B cell (primary cell): ENCODE measurements at regions of chr22 and their contacts with region 1.

Region 1: DNA sequence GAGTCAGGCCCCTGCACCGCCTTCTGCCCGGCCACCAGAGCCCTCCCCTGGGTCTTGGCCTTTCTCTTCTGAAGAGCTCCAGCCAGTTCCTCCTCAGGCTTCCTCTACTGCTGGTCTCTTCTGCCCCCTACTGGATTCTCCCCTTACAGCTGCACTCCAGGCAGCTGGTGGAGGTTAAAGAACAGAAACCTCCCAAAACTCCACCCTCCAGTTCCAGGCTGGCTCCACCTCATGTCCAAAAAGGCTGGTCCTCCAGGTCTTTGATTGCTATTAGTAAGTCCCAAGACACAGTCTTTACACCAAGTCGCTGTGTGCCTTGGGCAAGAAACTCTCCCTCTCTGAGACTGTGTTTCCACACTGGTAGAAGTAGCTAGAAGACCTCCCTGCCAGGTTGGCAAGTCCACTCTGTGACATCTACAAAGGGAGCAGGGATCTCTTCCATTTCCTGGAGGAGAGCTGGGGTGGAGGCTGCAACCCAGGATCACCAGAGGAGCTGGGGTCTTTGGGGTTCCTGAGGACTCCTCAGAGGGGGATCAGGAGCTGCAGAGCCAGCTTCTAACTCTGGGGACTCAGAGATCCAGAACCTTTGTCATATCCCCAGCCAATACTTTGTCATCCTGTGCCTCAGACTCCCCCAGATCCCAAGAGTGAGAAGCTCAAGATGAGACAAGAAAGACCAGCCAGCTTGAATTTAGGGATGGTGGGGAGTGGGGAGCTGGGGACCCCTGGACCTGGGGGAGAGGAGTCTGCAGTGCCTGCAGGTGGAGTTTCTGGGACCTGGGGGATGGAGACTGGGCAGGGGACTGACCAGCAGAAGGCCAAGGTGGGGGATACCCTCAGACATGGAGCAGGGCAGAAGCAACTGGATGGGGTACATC is 3.4 kb upstream of the IGLL5 start:
- DNase-seq: peak; percentile 86
- ATAC-seq: peak; percentile 59
- H3K4me3 ChIP-seq: peak overlapping the region in 2 of 5 experiments; percentile 11 to 44
- H3K4me3 Mint-ChIP-seq: peak overlapping the region; percentile 74
- H3K27ac ChIP-seq: peak overlapping the region; percentile 38 to 56
- H3K27ac Mint-ChIP-seq: peak overlapping the region; percentile 81
- H3K4me1 ChIP-seq: peaks cover 83 to 95% of the 10 kb centered on the region in 2 donors
- H3K4me1 Mint-ChIP-seq: peaks cover 94% of the 10 kb centered on the region
- H3K27me3 ChIP-seq: peaks cover 0 to 10% (median 3%) of the 10 kb centered on the region in 4 experiments
- H3K27me3 Mint-ChIP-seq: peaks cover 10% of the 10 kb centered on the region
- CTCF ChIP-seq: peak; percentile 77

Region 2: GRCh38 chr22:22666307-22667091 is 217.8 kb before region 1 on chr22:
- CTCF ChIA-PET with region 1: interaction called, 19 read pairs
- POLR2A ChIA-PET with region 1: no interaction called
- intact Hi-C with region 1: no loop called
- DNase-seq: peak; percentile 63
- ATAC-seq: peak; percentile 78
- H3K4me3 ChIP-seq: no peak overlapping the region
- H3K4me3 Mint-ChIP-seq: no peak overlapping the region
- H3K27ac ChIP-seq: no peak overlapping the region
- H3K27ac Mint-ChIP-seq: peak overlapping the region; percentile 6
- H3K4me1 ChIP-seq: peaks cover 6 to 18% of the 10 kb centered on the region in 2 donors
- H3K4me1 Mint-ChIP-seq: peaks cover 17% of the 10 kb centered on the region
- H3K27me3 ChIP-seq: peaks cover 0 to 2% (median 0%) of the 10 kb centered on the region in 4 experiments
- H3K27me3 Mint-ChIP-seq: peaks cover 3% of the 10 kb centered on the region
- CTCF ChIP-seq: peak; percentile 71

Region 3: DNA sequence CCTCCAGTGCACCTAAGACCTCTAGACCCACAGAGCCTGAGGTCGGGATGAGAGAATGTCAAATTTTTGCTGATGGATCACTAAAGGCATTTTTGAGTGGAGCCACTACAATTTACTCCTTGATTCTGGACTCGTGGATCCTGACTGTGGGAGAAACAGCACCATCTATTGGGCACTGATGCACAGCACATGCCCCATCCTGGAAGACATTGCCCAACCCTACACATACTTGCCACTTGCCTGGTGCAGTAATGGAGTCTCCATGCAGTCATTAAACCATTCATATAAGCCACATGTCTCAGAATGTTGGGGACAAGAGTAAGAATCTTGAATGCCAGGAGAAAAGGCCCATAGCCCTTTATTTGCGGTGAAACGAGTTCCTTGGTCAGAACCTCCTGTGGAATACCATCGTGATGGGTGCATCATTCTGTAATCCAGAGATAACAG is 135.9 kb before region 1 on chr22:
- CTCF ChIA-PET with region 1: interaction called, 55 read pairs
- POLR2A ChIA-PET with region 1: no interaction called
- intact Hi-C with region 1: loop called (anchors 1 kb)
- DNase-seq: peak; percentile 67
- ATAC-seq: peak; percentile 26
- H3K4me3 ChIP-seq: no peak overlapping the region
- H3K4me3 Mint-ChIP-seq: peak overlapping the region; percentile 26
- H3K27ac ChIP-seq: no peak overlapping the region
- H3K27ac Mint-ChIP-seq: peak overlapping the region; percentile 13
- H3K4me1 ChIP-seq: peaks cover 40 to 47% of the 10 kb centered on the region in 2 donors
- H3K4me1 Mint-ChIP-seq: peaks cover 51% of the 10 kb centered on the region
- H3K27me3 ChIP-seq: no peaks in the 10 kb centered on the region
- H3K27me3 Mint-ChIP-seq: no peaks in the 10 kb centered on the region
- CTCF ChIP-seq: no peak

Region 4: GRCh38 chr22:22810018-22810427 is 74.2 kb before region 1 on chr22:
- CTCF ChIA-PET with region 1: interaction called, 125 read pairs
- POLR2A ChIA-PET with region 1: interaction called, 5 read pairs
- intact Hi-C with region 1: loop called (anchors 1 kb)
- DNase-seq: peak; percentile 84
- ATAC-seq: peak; percentile 76
- H3K4me3 ChIP-seq: peak overlapping the region in 1 of 5 experiments; percentile 1
- H3K4me3 Mint-ChIP-seq: no peak overlapping the region
- H3K27ac ChIP-seq: no peak overlapping the region
- H3K27ac Mint-ChIP-seq: no peak overlapping the region
- H3K4me1 ChIP-seq: peaks cover 9 to 26% of the 10 kb centered on the region in 2 donors
- H3K4me1 Mint-ChIP-seq: peaks cover 24% of the 10 kb centered on the region
- H3K27me3 ChIP-seq: peaks cover 0 to 9% (median 0%) of the 10 kb centered on the region in 4 experiments
- H3K27me3 Mint-ChIP-seq: peaks cover 12% of the 10 kb centered on the region
- CTCF ChIP-seq: peak; percentile 91

Region 5: GRCh38 chr22:22865311-22866072 is 18.8 kb before region 1 on chr22:
- CTCF ChIA-PET with region 1: interaction called, 24 read pairs
- POLR2A ChIA-PET with region 1: interaction called, 4 read pairs
- intact Hi-C with region 1: loop called (anchors 2 kb)
- DNase-seq: peak; percentile 77
- ATAC-seq: peak; percentile 78
- H3K4me3 ChIP-seq: no peak overlapping the region
- H3K4me3 Mint-ChIP-seq: peak overlapping the region; percentile 39
- H3K27ac ChIP-seq: peak overlapping the region; percentile 39 to 45
- H3K27ac Mint-ChIP-seq: peak overlapping the region; percentile 74
- H3K4me1 ChIP-seq: peaks cover 29 to 35% of the 10 kb centered on the region in 2 donors
- H3K4me1 Mint-ChIP-seq: peaks cover 44% of the 10 kb centered on the region
- H3K27me3 ChIP-seq: no peaks in the 10 kb centered on the region
- H3K27me3 Mint-ChIP-seq: peaks cover 4% of the 10 kb centered on the region
- CTCF ChIP-seq: no peak

Region 6: DNA sequence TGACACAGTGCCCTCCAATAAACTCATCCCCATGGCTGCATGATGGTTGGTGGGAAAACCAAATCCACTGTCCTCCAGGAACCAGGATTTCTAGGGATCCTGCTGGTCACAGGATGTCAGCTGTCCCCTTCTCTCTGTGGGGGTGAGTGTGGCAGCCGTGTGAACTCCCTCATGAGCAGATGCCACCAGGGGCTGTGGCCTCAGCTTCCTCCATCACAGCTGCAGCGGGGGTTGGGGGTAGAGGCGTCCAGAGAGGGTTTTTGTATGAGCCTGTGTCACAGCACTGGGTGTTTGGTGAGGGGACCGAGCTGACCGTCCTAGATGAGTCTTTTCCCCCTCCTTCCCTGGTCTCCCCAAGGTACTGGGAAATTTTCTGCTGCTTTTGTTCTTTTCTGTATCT is 29.7 kb after region 1 on chr22:
- CTCF ChIA-PET with region 1: interaction called, 19 read pairs
- POLR2A ChIA-PET with region 1: no interaction called
- intact Hi-C with region 1: no loop called
- DNase-seq: peak; percentile 60
- ATAC-seq: peak; percentile 73
- H3K4me3 ChIP-seq: no peak overlapping the region
- H3K4me3 Mint-ChIP-seq: peak overlapping the region; percentile 55
- H3K27ac ChIP-seq: peak overlapping the region; percentile 65 to 77
- H3K27ac Mint-ChIP-seq: peak overlapping the region; percentile 76
- H3K4me1 ChIP-seq: peaks cover 57 to 83% of the 10 kb centered on the region in 2 donors
- H3K4me1 Mint-ChIP-seq: peaks cover 81% of the 10 kb centered on the region
- H3K27me3 ChIP-seq: no peaks in the 10 kb centered on the region
- H3K27me3 Mint-ChIP-seq: no peaks in the 10 kb centered on the region
- CTCF ChIP-seq: no peak